ENCODE measurements at regions of chr1 and their contacts with region 1.

Region 1: DNA sequence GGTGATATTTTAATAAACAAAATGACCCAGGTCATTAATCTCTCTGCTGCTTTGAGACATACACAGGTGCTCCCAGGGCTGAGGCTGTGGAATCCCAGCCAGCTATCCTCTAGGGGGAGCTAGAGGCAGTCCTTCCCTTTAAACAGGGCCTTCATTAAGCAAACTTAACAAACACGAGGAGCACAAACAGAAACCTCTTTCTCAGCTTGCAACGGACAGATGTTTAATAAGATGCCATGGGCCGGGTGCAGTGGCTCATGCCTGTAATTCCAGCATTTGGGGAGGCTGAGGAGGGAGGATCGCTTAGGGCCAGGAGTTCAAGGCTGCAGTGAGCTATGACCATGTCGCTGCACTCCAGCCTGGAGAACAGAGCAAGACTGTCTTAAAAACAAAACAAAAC is 106.7 kb downstream of the HIVEP3 start:
- DNase-seq: peak; percentile 85
- H3K4me3 Mint-ChIP-seq: no peak overlapping the region
- H3K27ac Mint-ChIP-seq: no peak overlapping the region
- H3K4me1 Mint-ChIP-seq: peaks cover 43% of the 10 kb centered on the region
- H3K27me3 Mint-ChIP-seq: no peaks in the 10 kb centered on the region

Region 2: GRCh38 chr1:41573785-41574713 is 238.0 kb before region 1 on chr1:
- CTCF ChIA-PET with region 1: interaction called, 3 read pairs
- intact Hi-C with region 1: loop called (anchors 1 kb)
- DNase-seq: peak; percentile 92
- H3K4me3 Mint-ChIP-seq: no peak overlapping the region
- H3K27ac Mint-ChIP-seq: peak overlapping the region; percentile 20
- H3K4me1 Mint-ChIP-seq: peaks cover 42% of the 10 kb centered on the region
- H3K27me3 Mint-ChIP-seq: no peaks in the 10 kb centered on the region

Region 3: DNA sequence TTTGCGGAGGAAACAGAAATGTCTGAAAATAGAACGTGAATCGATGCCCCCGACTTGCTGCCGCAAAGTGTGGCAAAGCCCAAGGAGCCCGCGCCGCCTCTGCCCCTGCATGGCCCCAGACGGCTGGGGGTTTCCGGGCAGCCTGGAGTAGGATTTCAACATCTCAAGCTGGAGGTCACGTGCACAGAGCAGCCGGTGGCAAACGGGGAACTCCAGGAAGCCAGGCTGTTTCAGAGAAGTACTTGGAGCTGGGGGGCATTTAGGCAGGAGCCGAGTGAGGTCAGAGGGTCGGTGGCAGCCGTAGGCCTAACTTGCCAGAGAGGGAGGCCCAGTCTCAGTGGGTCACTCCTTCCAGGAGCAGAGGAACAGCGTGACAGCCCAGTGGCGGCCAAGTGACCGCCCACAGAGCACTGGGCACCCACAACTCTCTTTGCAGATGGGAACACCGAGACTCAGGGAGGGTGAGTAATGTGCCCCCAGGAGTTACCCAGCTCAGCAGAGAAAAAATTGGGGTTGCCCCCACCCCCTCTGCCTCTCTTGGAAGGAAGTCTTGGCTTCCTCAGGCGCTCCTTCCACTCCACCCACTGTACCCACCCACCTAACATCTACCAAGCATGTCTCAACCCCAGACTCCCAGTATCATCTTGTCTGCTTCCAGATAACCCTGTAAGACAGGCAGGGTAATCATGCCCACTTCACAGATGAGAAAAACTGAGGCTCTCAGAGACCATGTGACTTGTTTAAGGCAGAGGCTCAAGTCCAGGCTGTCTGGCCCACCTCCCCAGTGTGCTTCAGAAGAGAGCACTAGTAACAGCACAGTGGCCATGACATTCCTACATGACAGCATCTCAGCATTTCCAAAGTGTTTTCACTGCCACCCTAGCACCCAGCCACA is 72.7 kb before region 1 on chr1:
- CTCF ChIA-PET with region 1: no interaction called
- intact Hi-C with region 1: no loop called
- DNase-seq: peak; percentile 96
- H3K4me3 Mint-ChIP-seq: peak overlapping the region; percentile 73
- H3K27ac Mint-ChIP-seq: peak overlapping the region; percentile 98
- H3K4me1 Mint-ChIP-seq: peaks cover 93% of the 10 kb centered on the region
- H3K27me3 Mint-ChIP-seq: no peaks in the 10 kb centered on the region

Region 4: GRCh38 chr1:41842993-41843755 is 31.1 kb after region 1 on chr1:
- CTCF ChIA-PET with region 1: no interaction called
- intact Hi-C with region 1: no loop called
- DNase-seq: no peak
- H3K4me3 Mint-ChIP-seq: no peak overlapping the region
- H3K27ac Mint-ChIP-seq: no peak overlapping the region
- H3K4me1 Mint-ChIP-seq: peaks cover 33% of the 10 kb centered on the region
- H3K27me3 Mint-ChIP-seq: no peaks in the 10 kb centered on the region

Region 5: DNA sequence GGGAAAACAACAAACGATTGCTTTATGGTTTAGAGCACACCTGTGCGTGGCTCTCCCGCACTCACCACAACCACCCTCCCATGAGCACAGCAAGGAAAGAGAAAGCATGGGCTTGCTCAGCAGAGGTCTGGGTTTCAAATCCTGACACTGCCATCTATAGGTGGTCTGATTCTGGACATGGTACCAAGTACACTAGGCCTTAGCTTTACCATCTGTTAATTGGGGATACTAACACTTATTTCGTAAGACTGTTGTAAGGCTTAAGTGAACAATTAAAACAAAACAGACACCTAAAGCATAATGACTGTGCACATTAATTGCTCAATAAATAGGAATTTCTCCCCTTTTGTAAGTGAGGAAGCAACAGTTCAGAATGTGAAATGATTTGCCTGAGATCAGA is 56.5 kb after region 1 on chr1:
- CTCF ChIA-PET with region 1: interaction called, 5 read pairs
- intact Hi-C with region 1: loop called (anchors 1 kb)
- DNase-seq: peak; percentile 58
- H3K4me3 Mint-ChIP-seq: no peak overlapping the region
- H3K27ac Mint-ChIP-seq: no peak overlapping the region
- H3K4me1 Mint-ChIP-seq: peaks cover 34% of the 10 kb centered on the region
- H3K27me3 Mint-ChIP-seq: no peaks in the 10 kb centered on the region

Region 6: DNA sequence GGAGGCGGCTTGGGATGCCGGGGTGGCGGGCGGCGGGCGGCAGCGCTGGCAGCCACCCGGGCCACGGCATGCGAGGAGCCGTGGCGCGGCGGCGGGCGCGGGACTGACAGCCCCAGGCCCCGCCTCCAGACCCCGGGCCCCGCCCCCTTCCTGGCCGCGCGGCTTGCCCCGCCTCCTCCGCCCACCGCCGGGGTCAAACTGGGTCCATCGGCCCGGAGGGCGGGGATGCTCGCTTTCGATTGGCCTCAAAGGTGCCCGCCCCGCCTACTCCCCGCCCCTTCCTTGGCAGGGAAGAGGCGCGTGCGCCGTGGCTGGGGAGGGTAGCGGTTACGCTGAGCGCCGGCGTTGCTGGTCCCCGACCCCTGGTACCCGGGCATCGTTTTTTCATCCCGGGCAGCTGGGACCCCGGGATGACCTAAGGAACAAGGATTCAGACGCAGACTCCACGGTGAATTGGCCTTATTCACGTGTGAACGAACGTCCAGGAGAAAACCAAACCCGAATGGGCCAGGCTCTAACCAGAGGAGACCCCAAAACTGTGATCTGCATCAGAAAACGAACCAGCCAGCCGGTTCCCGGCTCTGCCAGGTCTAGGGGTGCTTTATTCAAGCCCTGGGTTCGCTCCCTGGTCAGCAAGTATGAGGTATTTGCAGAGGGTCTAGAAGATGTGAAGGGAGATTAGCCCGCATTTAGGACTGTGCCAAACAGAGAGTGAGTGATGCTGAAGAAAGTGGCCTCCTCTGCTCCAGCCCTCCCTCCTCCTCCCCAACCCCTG is 224.0 kb after region 1 on chr1:
- CTCF ChIA-PET with region 1: no interaction called
- intact Hi-C with region 1: loop called (anchors 5 kb)
- DNase-seq: peak; percentile 99
- H3K4me3 Mint-ChIP-seq: peak overlapping the region; percentile 79
- H3K27ac Mint-ChIP-seq: peak overlapping the region; percentile 59
- H3K4me1 Mint-ChIP-seq: peaks cover 32% of the 10 kb centered on the region
- H3K27me3 Mint-ChIP-seq: no peaks in the 10 kb centered on the region

Region 7: DNA sequence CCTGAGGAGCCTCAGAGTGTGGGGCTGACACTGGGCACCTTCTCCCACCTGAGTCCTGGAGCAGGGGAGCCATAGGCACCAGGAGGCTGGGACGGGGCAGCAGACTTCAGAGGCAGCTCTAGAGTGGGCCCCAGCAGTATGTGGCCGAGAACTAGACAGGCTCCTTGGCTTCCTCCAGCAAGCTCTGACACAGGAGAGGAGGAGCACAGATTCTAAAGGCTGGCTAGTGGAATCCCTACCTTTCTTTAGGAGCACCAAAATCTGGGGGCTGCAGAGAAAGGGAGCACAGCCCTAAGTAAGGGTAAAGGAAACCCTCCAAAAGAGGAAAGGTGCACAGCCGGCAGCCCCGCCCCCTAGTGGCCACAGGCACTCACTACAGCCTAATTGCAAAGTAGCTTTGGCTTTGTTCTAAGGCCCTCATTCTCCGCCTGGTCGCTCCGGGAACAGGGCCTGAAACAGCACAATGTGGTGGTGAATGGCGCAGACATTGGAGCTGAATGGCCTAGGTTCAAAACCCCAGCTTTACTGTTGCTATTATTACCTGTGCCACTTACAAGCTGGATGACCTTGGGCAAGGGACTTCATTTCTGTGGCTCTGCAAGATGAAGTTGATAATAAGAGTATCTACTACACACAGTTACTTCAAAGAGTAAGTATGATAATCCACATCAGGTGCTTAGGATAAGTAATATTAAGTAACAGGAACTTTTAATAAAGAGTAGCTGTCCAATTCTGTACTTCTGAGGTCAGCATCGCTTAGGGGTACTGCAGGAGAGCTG is 361.3 kb after region 1 on chr1:
- CTCF ChIA-PET with region 1: interaction called, 4 read pairs
- intact Hi-C with region 1: loop called (anchors 1 kb)
- DNase-seq: peak; percentile 76
- H3K4me3 Mint-ChIP-seq: no peak overlapping the region
- H3K27ac Mint-ChIP-seq: no peak overlapping the region
- H3K4me1 Mint-ChIP-seq: no peaks in the 10 kb centered on the region
- H3K27me3 Mint-ChIP-seq: no peaks in the 10 kb centered on the region

Region 8: GRCh38 chr1:42469727-42470126 is 657.7 kb after region 1 on chr1:
- CTCF ChIA-PET with region 1: no interaction called
- intact Hi-C with region 1: no loop called
- DNase-seq: no peak
- H3K4me3 Mint-ChIP-seq: no peak overlapping the region
- H3K27ac Mint-ChIP-seq: no peak overlapping the region
- H3K4me1 Mint-ChIP-seq: no peaks in the 10 kb centered on the region
- H3K27me3 Mint-ChIP-seq: no peaks in the 10 kb centered on the region